Activated naive CD4-positive, alpha-beta T cell treated with anti-CD3 and anti-CD28 coated beads for 36 hours (primary cell): ENCODE measurements at regions of chr2 and their contacts with region 1.

Region 1: DNA sequence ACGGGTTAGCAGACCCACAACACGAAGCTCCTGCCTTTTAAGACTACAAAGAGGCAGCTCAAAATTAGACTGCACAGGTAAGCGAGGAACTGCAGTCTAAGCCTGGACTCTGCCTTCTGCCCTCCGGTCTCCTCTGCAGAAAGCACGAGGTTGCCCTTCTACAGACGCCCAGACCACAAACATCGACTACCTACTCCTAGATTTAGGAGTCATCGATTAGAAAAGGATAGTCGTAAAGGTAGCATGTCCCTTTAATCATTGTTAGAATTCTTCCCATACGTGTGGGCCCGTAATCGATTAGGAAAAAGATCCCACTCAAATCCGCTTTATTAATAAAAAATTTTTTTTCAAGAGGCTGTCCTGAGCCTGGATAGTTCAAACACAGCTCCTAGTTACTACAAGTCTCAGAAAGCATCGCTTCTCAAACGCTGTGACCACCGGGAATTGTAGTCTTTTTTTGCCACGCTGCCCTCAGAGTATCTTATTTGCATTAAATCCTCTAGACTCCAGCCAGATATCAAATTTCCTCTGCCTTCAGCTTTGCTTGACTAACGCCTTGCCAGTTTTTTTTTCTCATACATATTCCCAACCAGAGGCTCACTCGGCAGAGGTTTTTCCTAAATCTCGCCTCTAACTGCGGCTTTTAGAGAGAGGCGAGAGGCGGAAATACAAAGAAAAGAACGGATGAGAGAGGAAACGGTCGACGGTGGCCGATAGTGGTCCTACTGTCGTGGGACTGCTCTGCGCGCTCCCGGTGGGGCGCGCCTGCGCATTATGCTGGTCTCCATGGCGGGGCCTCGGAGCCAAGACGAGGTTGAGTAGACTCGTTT is at the starts of genes CARF and WDR12:
- DNase-seq: peak; percentile 95
- H3K4me3 Mint-ChIP-seq: peak within 1 kb of the TSS; percentile 87
- H3K27ac Mint-ChIP-seq: peak within 1 kb of the TSS; percentile 94
- H3K4me1 Mint-ChIP-seq: peaks cover 32% of the 10 kb centered on the region
- H3K27me3 Mint-ChIP-seq: no peaks in the 10 kb centered on the region
- total RNA-seq, gene CARF: 4.0 to 5.4 TPM
- total RNA-seq, gene WDR12: 83.0 to 98.3 TPM

Region 2: GRCh38 chr2:201780674-201781581 is 1130.8 kb before region 1 on chr2 and contains the start of gene ALS2:
- CTCF ChIA-PET with region 1: no interaction called
- intact Hi-C with region 1: loop called (anchors 5 kb)
- DNase-seq: peak; percentile 96
- H3K4me3 Mint-ChIP-seq: peak within 1 kb of the TSS; percentile 86
- H3K27ac Mint-ChIP-seq: peak within 1 kb of the TSS; percentile 83
- H3K4me1 Mint-ChIP-seq: peaks cover 13% of the 10 kb centered on the region
- H3K27me3 Mint-ChIP-seq: peaks cover 3% of the 10 kb centered on the region
- total RNA-seq, gene ALS2: 9.4 to 11.2 TPM

Region 3: DNA sequence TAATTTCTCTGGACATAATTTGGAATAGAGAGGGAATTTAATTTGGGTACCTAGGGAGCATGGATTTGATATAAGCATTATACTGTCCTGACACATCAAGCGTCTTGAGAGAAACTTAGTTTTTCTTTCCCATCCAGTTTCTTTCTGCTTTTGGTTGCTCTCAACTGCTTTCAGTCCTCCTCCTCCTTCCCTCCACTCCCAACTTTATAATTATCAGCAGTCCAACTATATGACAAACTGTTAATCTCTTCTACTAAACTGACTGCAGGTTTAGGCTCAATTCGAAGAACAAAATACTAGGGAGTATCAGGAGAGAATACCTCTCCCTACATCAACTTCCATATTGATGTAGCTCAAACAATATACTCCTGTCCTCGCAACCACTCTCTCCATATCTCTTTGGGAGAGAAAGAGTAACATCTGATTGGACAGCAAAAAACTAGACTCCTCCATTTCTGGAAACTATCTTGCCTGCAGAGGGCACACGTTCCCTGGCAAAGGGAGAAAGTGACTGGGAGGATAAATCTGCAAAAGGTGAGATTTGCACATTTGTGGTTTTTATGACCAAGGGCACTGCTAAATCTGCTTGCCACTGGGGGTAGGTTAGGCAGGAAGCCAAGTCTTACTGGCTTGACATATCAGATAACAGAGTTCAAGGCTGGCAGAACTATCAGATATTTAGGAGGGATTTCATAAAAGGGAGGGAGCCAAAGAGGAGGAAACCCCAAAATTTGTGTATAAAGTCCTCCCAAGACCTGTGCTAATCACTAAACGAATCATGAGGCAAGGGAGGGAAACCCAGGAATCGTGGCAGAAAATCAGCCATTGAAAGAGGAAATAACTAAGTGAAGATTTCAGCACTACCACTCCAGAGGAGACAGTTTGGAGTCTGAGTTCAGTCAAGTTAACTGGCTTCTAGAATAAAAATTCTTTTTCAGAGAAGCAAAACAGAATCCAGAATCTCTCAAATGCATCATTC is 80.2 kb before region 1 on chr2:
- CTCF ChIA-PET with region 1: interaction called, 3 read pairs
- intact Hi-C with region 1: loop called (anchors 5 kb)
- DNase-seq: peak; percentile 80
- H3K4me3 Mint-ChIP-seq: no peak overlapping the region
- H3K27ac Mint-ChIP-seq: no peak overlapping the region
- H3K4me1 Mint-ChIP-seq: peaks cover 10% of the 10 kb centered on the region
- H3K27me3 Mint-ChIP-seq: no peaks in the 10 kb centered on the region

Region 4: DNA sequence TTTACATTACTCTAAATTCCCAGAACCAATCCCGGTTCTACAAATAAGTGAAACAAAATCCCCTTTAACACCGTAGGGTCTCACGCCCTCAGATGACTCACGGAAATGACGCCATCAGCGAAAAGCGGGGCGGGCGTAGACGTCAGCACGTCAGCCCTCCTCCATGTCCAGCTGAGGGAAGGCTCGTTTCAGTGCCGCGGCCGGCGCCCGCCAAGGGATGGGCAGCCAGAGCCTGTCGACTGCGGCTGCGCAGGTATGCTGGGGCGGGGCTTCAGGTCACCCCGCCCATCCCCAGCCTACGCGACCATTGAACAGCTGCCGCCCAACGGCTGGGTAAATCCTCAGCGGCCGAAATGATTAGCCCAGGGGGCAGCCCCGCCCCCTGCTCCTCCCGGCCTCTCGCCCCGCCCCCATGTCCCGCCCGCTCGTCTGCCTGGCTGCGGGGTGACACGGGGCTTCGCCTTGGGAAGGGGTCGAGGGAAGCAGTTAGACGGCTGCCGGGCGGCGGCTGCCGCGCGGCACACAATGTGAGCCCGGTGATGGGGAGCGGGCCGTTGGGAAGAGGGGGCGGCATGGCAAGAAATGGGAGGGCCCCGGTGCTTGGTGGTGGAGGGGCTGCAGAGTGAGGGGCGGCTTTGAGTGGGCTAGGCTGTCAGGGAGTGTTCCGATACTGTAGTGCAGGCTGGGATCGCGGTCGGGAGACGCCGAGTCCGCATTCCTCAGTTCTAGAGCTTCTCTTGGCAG is 102.9 kb after region 1 on chr2 and contains the start of gene NBEAL1:
- CTCF ChIA-PET with region 1: no interaction called
- intact Hi-C with region 1: loop called (anchors 1 kb)
- DNase-seq: peak; percentile 97
- H3K4me3 Mint-ChIP-seq: peak within 1 kb of the TSS; percentile 95
- H3K27ac Mint-ChIP-seq: peak within 1 kb of the TSS; percentile 74
- H3K4me1 Mint-ChIP-seq: peaks cover 27% of the 10 kb centered on the region
- H3K27me3 Mint-ChIP-seq: no peaks in the 10 kb centered on the region
- total RNA-seq, gene NBEAL1: 7.9 to 8.3 TPM

Region 5: DNA sequence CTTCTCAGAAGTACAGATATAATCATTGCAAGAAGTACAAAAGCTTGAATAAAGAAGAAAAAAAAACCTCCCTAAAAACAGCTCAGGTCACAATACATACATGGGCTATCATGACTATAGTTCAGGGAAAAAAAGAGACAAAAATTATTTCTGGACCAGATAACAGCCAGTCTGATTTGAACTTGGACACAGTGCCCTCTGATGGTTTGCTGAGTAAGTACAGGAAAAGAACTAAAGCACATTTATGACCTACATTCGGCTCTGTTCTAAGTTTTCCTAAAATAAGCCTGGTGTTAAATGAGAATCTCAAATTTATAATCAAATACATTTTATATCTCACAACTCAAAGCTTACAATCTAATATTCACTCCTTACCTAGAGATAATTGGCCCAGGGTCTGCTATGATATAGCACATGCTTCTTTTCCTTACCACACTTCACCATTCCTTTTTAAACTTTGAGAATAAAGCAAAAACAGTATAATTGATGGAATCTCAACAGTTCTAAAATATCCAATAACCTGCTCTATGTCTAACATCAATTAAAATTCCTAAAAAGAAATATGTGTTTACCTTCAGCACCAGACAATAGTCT is 542.2 kb after region 1 on chr2:
- CTCF ChIA-PET with region 1: no interaction called
- intact Hi-C with region 1: loop called (anchors 5 kb)
- DNase-seq: peak; percentile 54
- H3K4me3 Mint-ChIP-seq: no peak overlapping the region
- H3K27ac Mint-ChIP-seq: no peak overlapping the region
- H3K4me1 Mint-ChIP-seq: peaks cover 2% of the 10 kb centered on the region
- H3K27me3 Mint-ChIP-seq: no peaks in the 10 kb centered on the region